Pancreas (tissue), 10 donors: ENCODE measurements at regions of chr2 and their contacts with region 1.

Region 1: GRCh38 chr2:135709992-135710391 is 31.7 kb upstream of the UBXN4 start:
- DNase-seq: peak in 5 of 6 donors; percentile 18 to 81 (median 54)
- ATAC-seq: peak in 3 of 4 donors; percentile 81 to 89 (median 87)
- H3K4me3 ChIP-seq: no peak overlapping the region
- H3K27ac ChIP-seq: no peak overlapping the region
- H3K4me1 ChIP-seq: no peaks in the 10 kb centered on the region
- H3K27me3 ChIP-seq: no peaks in the 10 kb centered on the region
- CTCF ChIP-seq: peak; percentile 67 to 93 (median 90)

Region 2: GRCh38 chr2:134988994-134989605 is 720.9 kb before region 1 on chr2:
- intact Hi-C with region 1: loop called in 1 of 3 experiments (anchors 10 kb)
- DNase-seq: no peak
- ATAC-seq: peak; percentile 53 to 87 (median 81)
- H3K4me3 ChIP-seq: no peak overlapping the region
- H3K27ac ChIP-seq: no peak overlapping the region
- H3K4me1 ChIP-seq: no peaks in the 10 kb centered on the region
- H3K27me3 ChIP-seq: no peaks in the 10 kb centered on the region
- CTCF ChIP-seq: peak in 1 of 4 donors; percentile 36

Region 3: GRCh38 chr2:135004005-135004746 is 705.8 kb before region 1 on chr2:
- intact Hi-C with region 1: loop called in 1 of 3 experiments (anchors 10 kb)
- DNase-seq: peak; percentile 47 to 87 (median 72)
- ATAC-seq: peak; percentile 99 to 100 (median 100)
- H3K4me3 ChIP-seq: no peak overlapping the region
- H3K27ac ChIP-seq: no peak overlapping the region
- H3K4me1 ChIP-seq: no peaks in the 10 kb centered on the region
- H3K27me3 ChIP-seq: no peaks in the 10 kb centered on the region
- CTCF ChIP-seq: peak; percentile 42 to 87 (median 84)